Gastrocnemius medialis (tissue), 4 donors: ENCODE measurements at regions of chr4 and their contacts with region 1.

Region 1: GRCh38 chr4:41360214-41360920 is 103.6 kb downstream of the UCHL1 start:
- DNase-seq: peak; percentile 62 to 83
- ATAC-seq: peak; percentile 45 to 56
- H3K4me3 ChIP-seq: peak overlapping the region; percentile 84 to 96 (median 92)
- H3K27ac ChIP-seq: peak overlapping the region; percentile 89 to 93 (median 90)
- H3K4me1 ChIP-seq: peaks cover 34 to 35% of the 10 kb centered on the region in 2 donors
- H3K27me3 ChIP-seq: no peaks in the 10 kb centered on the region
- CTCF ChIP-seq: peak in 1 of 5 experiments; percentile 14
- POLR2A ChIP-seq: peak; percentile 22 to 55

Region 2: GRCh38 chr4:41418444-41418843 is 58.1 kb after region 1 on chr4:
- in situ Hi-C with region 1: no loop called
- intact Hi-C with region 1: loop called (anchors 2 kb)
- DNase-seq: peak; percentile 75 to 88
- ATAC-seq: peak; percentile 87 to 91
- H3K4me3 ChIP-seq: peak overlapping the region in 2 of 4 donors; percentile 13 to 17
- H3K27ac ChIP-seq: peak overlapping the region; percentile 57 to 79 (median 74)
- H3K4me1 ChIP-seq: peaks cover 36 to 38% of the 10 kb centered on the region in 2 donors
- H3K27me3 ChIP-seq: no peaks in the 10 kb centered on the region
- CTCF ChIP-seq: no peak
- POLR2A ChIP-seq: no peak

Region 3: GRCh38 chr4:41525129-41525528 is 164.8 kb after region 1 on chr4:
- in situ Hi-C with region 1: loop called in 3 of 4 experiments (anchors 10 to 25 kb)
- intact Hi-C with region 1: no loop called
- DNase-seq: no peak
- ATAC-seq: peak; percentile 54 to 66
- H3K4me3 ChIP-seq: no peak overlapping the region
- H3K27ac ChIP-seq: peak overlapping the region in 3 of 4 donors; percentile 32 to 60 (median 55)
- H3K4me1 ChIP-seq: peaks cover 17 to 38% of the 10 kb centered on the region in 2 donors
- H3K27me3 ChIP-seq: no peaks in the 10 kb centered on the region
- CTCF ChIP-seq: no peak
- POLR2A ChIP-seq: no peak

Region 4: GRCh38 chr4:41538017-41538733 is 177.8 kb after region 1 on chr4 and contains the start of gene LIMCH1:
- in situ Hi-C with region 1: loop called in 3 of 4 experiments (anchors 10 to 25 kb)
- intact Hi-C with region 1: loop called (anchors 2 kb)
- DNase-seq: peak; percentile 78 to 87
- ATAC-seq: peak; percentile 72 to 73
- H3K4me3 ChIP-seq: peak within 1 kb of the TSS; percentile 48 to 52 (median 49)
- H3K27ac ChIP-seq: peak within 1 kb of the TSS; percentile 85 to 94 (median 91)
- H3K4me1 ChIP-seq: peaks cover 58 to 68% of the 10 kb centered on the region in 2 donors
- H3K27me3 ChIP-seq: no peaks in the 10 kb centered on the region
- CTCF ChIP-seq: peak in 1 of 5 experiments; percentile 7
- POLR2A ChIP-seq: peak; percentile 28 to 38
- total RNA-seq, gene LIMCH1: 36.2 to 71.4 (median 52.1) TPM

Region 5: DNA sequence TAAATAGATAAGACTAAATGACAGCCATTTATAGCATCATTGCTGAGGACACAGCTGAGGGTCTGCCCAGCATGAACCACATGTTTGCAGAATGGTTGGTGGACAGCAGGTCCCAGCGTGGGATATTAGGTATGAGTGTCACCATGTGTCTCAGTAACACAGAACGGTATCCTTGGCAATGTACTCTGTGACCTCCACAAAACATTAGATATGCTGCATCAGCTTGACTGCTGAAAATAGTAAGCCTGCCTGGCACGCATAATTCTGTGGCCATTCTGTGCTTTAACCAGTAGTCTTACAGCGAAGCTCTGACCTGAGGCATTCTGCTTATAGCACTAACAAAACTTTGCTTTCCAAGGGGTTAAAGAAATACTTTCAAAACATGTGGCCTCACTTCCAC is 209.6 kb after region 1 on chr4:
- in situ Hi-C with region 1: no loop called
- intact Hi-C with region 1: loop called (anchors 2 kb)
- DNase-seq: peak; percentile 43 to 75
- ATAC-seq: peak; percentile 62 to 89
- H3K4me3 ChIP-seq: no peak overlapping the region
- H3K27ac ChIP-seq: peak overlapping the region; percentile 75 to 87 (median 82)
- H3K4me1 ChIP-seq: peaks cover 78 to 80% of the 10 kb centered on the region in 2 donors
- H3K27me3 ChIP-seq: no peaks in the 10 kb centered on the region
- CTCF ChIP-seq: peak in 2 of 5 experiments; percentile 13 to 26
- POLR2A ChIP-seq: no peak

Region 6: GRCh38 chr4:41644288-41644914 is 284.0 kb after region 1 on chr4:
- in situ Hi-C with region 1: loop called in 1 of 4 experiments (anchors 10 kb)
- intact Hi-C with region 1: loop called (anchors 2 kb)
- DNase-seq: peak; percentile 43 to 71
- ATAC-seq: peak; percentile 92 to 93
- H3K4me3 ChIP-seq: peak overlapping the region in 3 of 4 donors; percentile 32 to 47 (median 37)
- H3K27ac ChIP-seq: peak overlapping the region; percentile 3 to 74 (median 36)
- H3K4me1 ChIP-seq: peaks cover 3 to 18% of the 10 kb centered on the region in 2 donors
- H3K27me3 ChIP-seq: no peaks in the 10 kb centered on the region
- CTCF ChIP-seq: peak; percentile 77 to 92 (median 88)
- POLR2A ChIP-seq: no peak

Region 7: DNA sequence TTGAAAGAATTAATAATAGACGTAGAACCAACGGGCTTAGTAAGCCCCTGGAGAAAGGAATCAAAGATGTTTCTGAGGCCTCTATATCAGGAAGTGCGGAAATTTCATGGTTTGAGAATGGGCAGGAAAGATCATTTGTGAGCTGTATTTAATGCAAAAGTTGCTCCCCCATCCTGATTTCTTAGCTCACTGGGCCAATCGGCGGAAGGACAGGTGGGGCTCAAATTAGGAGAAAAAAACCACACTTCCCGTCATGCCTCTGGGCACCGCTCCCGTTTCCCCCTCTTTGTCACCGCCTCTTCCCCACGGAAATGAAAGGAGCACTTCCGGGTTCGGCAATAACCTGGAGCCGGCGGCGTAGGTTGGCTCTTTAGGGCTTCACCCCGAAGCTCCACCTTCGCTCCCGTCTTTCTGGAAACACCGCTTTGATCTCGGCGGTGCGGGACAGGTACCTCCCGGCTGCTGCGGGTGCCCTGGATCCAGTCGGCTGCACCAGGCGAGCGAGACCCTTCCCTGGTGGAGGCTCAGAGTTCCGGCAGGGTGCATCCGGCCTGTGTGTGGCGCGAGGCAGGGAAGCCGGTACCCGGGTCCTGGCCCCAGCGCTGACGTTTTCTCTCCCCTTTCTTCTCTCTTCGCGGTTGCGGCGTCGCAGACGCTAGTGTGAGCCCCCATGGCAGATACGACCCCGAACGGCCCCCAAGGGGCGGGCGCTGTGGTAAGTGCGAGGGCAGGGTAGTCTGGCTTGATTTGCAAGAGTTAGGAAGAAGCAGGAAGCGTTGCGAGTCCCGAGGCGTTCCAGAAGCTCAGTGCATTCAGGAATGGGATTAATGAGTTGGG is 574.7 kb after region 1 on chr4 and contains the start of gene TMEM33:
- in situ Hi-C with region 1: no loop called
- intact Hi-C with region 1: no loop called
- DNase-seq: peak; percentile 82 to 84
- ATAC-seq: peak; percentile 96 to 97
- H3K4me3 ChIP-seq: peak within 1 kb of the TSS; percentile 78 to 99 (median 88)
- H3K27ac ChIP-seq: peak within 1 kb of the TSS; percentile 90 to 92 (median 90)
- H3K4me1 ChIP-seq: peaks cover 27 to 32% of the 10 kb centered on the region in 2 donors
- H3K27me3 ChIP-seq: no peaks in the 10 kb centered on the region
- CTCF ChIP-seq: peak in 2 of 5 experiments; percentile 25 to 28
- POLR2A ChIP-seq: peak; percentile 74 to 87
- total RNA-seq, gene TMEM33: 20.6 to 29.3 (median 26.4) TPM